Esophagus squamous epithelium (tissue), 5 donors: ENCODE measurements at regions of chr19 and their contacts with region 1.

Region 1: GRCh38 chr19:43532962-43533545 is at the start of gene ZNF575:
- DNase-seq: peak; percentile 75
- H3K4me3 ChIP-seq: peak within 1 kb of the TSS; percentile 49 to 78 (median 59)
- H3K27ac ChIP-seq: peak within 1 kb of the TSS; percentile 84 to 97 (median 94)
- H3K4me1 ChIP-seq: peaks cover 8 to 63% (median 14%) of the 10 kb centered on the region in 3 donors
- H3K27me3 ChIP-seq: no peaks in the 10 kb centered on the region
- CTCF ChIP-seq: no peak
- POLR2A ChIP-seq: peak in 1 of 4 donors; percentile 37
- total RNA-seq, gene ZNF575: not detected

Region 2: DNA sequence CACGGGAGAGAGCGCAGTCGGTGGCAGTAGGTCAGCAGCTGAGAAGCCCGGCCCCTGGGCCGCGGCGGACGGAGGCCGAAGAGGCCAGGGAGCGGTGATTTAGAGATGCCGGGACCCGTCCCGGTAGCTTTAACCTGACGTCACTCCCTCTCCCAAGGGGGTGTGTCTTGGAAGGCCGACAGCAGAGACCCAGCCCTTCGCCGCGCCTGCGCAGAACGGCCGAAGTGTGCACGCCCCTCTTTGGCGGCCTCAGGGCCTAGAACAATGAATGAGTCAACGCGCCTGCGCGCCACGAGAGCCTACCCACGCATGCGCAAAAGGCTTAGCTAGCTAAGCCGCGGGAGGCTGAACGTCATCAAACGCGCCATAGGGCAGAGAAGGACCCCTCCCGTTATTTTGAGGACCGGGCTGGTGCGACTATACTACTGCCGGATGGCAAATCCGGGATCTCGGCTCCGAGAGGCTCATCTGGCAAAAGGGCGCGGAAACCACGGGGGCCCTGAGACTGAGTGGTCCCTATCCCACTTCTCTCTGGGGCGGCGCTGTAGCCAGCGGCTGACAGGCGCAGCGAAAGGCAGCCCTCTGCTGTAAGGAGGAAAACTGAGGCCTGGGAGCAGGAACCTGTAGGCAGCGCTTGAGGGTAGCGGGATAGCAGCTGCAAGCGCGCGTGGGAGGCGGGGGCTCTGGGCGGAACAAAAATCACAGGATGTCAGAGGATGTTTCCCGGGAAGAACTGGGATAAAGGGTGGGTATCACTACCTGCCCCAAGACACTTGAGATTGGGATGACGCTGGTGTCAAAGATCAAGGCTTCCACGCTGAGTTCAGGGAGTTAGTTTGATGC is 63.2 kb after region 1 on chr19 and contains the starts of genes IRGQ and ZNF576:
- intact Hi-C with region 1: loop called (anchors 10 kb)
- DNase-seq: peak; percentile 92
- H3K4me3 ChIP-seq: peak within 1 kb of the TSS; percentile 49 to 82 (median 74)
- H3K27ac ChIP-seq: peak within 1 kb of the TSS; percentile 91 to 99 (median 98)
- H3K4me1 ChIP-seq: peaks cover 27 to 54% (median 29%) of the 10 kb centered on the region in 3 donors
- H3K27me3 ChIP-seq: no peaks in the 10 kb centered on the region
- CTCF ChIP-seq: peak in 3 of 6 experiments; percentile 6 to 17 (median 15)
- POLR2A ChIP-seq: peak in 3 of 4 donors; percentile 58 to 90 (median 79)
- total RNA-seq, gene IRGQ: 9.6 to 18.4 (median 15.1) TPM
- total RNA-seq, gene ZNF576: 4.2 to 16.8 (median 10.0) TPM